GM12878 (cell line): ENCODE measurements at regions of chr2 and their contacts with region 1.

Region 1: DNA sequence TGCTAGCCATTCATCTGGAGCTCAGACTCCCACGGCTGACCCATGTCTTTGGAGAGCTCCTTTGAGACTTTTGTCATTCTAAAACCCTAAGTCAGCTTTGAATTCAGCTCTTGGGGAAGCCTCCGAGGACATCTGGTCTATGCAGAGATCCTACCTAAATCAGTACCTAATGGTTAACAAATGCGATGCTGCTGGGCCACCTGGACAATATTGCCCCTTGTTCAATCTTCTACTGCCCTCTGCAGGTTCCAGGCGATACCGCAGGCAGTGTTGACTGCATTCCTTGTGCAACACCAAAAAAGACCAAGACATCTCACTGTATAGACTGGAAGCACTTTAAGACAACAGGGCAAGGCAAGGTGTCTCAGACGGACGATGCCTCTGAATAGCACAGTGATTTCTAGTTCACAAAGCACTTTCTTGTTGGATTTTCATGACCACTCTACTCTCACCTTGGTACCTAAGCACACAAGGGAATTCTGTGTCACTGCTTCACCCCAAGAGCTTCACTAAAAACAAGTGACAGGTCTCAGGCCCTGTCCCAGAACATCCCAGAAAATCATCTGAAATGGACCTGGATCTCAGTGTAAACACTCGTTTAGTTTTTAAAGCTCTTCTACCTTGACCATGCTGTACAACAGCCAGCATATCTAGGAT is 80.9 kb downstream of the XDH start:
- DNase-seq: peak; percentile 24
- ATAC-seq: peak; percentile 98
- H3K4me3 ChIP-seq: no peak overlapping the region
- H3K27ac ChIP-seq: no peak overlapping the region
- H3K4me1 ChIP-seq: no peaks in the 10 kb centered on the region
- H3K27me3 ChIP-seq: peaks cover 0 to 3% of the 10 kb centered on the region in 2 experiments; a peak in 1 of 4 replicates
- CTCF ChIP-seq: peak; percentile 96 to 98 (median 97)
- EP300 ChIP-seq: no peak
- POLR2A ChIP-seq: no peak
- RAD21 ChIP-seq: peak; percentile 99

Region 2: DNA sequence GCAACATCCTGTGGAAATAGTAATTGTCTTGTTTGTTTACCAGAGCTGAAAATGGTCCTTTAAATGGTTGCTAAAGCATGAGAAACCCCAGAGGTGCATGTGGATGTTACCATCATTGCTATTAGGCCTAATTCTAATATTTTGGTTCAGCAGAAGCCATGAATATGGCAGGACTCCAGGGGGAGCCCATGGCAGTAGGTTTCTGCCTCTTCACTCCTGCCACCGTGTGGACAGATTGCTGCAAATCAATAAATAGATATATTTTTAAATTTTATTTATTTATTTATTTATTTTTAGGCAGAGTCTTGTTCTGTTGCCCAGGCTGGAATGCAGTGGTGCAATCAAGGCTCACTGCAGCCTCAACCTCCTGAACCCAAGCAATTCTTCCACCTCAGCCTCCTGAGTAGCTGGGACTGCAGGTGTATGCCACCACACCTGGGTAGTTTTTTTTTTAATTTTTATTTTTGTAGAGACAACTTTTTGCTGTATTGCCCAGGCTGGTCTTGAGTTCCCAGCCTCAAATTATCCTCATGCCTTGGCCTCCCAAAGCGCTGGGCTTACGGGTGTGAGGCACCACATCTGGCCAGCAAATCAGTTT is 471.5 kb before region 1 on chr2:
- CTCF ChIA-PET with region 1: interaction called, 89 read pairs
- POLR2A ChIA-PET with region 1: no interaction called
- RAD21 ChIA-PET with region 1: interaction called, 25 read pairs
- SMC1A ChIA-PET with region 1: interaction called, 9 read pairs
- in situ Hi-C with region 1: loop called (anchors 5 kb)
- intact Hi-C with region 1: loop called (anchors 1 kb)
- DNase-seq: no peak
- ATAC-seq: peak; percentile 84
- H3K4me3 ChIP-seq: no peak overlapping the region
- H3K27ac ChIP-seq: no peak overlapping the region
- H3K4me1 ChIP-seq: peaks cover 14% of the 10 kb centered on the region
- H3K27me3 ChIP-seq: no peaks in the 10 kb centered on the region
- CTCF ChIP-seq: peak; percentile 72 to 92 (median 86)
- EP300 ChIP-seq: no peak
- POLR2A ChIP-seq: no peak
- RAD21 ChIP-seq: peak; percentile 72

Region 3: GRCh38 chr2:31151501-31151900 is 182.2 kb before region 1 on chr2:
- CTCF ChIA-PET with region 1: interaction called, 10 read pairs
- POLR2A ChIA-PET with region 1: no interaction called
- RAD21 ChIA-PET with region 1: interaction called, 3 read pairs
- SMC1A ChIA-PET with region 1: interaction called, 11 read pairs
- in situ Hi-C with region 1: no loop called
- intact Hi-C with region 1: no loop called
- DNase-seq: no peak
- ATAC-seq: no peak
- H3K4me3 ChIP-seq: no peak overlapping the region
- H3K27ac ChIP-seq: no peak overlapping the region
- H3K4me1 ChIP-seq: no peaks in the 10 kb centered on the region
- H3K27me3 ChIP-seq: no peaks in the 10 kb centered on the region; a peak in 1 of 4 replicates
- CTCF ChIP-seq: 0 out of 6 replicates have a peak, but pooled peaks of 1 of the 3 experiments have one; percentile 4
- EP300 ChIP-seq: no peak
- POLR2A ChIP-seq: no peak
- RAD21 ChIP-seq: no peak

Region 4: DNA sequence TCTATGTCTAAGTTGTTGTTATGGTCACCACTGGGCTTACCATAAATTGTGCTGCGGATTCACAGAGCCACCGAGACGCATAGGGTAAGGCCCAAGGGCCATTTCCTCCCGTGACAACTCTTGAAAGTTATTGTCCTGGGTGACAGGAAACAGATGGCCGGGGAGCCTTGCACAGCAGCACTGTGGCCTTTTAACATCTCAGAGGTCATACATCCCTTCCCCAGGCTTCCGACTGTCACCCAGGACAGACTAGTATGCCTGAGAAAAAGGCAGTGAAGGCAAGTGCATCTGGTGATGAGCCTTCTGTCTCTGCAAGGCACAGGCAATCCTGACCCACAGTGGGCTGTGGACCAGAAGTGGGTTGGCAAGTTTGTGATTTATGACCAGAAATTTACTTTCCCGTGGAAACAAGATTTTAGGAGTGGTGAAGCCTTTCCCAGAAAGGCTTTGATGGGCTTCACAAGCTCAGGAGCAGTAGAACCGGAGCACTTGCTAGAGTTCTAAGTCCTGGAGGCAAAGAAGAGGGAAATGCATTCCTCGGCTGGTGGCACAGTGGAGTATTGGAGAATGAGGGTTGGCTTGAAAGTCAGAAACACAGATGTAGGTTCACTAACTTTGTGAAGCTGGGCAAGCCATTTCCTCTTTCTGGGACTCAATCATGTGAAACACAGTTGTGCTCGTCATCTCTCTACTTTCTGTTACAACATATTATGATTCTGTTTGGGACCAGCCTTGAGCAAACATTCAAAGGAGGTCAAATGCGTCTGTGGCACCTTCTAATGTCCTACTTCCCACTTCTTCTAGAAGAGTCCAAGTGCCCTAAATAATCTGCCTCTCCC is 114.3 kb before region 1 on chr2:
- CTCF ChIA-PET with region 1: interaction called, 5 read pairs
- POLR2A ChIA-PET with region 1: no interaction called
- RAD21 ChIA-PET with region 1: no interaction called
- SMC1A ChIA-PET with region 1: interaction called, 4 read pairs
- in situ Hi-C with region 1: no loop called
- intact Hi-C with region 1: loop called (anchors 5 kb)
- DNase-seq: peak; percentile 79
- ATAC-seq: peak; percentile 80
- H3K4me3 ChIP-seq: 0 out of 2 replicates have a peak overlapping the region, but pooled peaks have one; percentile 2
- H3K27ac ChIP-seq: peak overlapping the region; percentile 52
- H3K4me1 ChIP-seq: peaks cover 50% of the 10 kb centered on the region
- H3K27me3 ChIP-seq: no peaks in the 10 kb centered on the region
- CTCF ChIP-seq: no peak
- EP300 ChIP-seq: peak; percentile 28 to 48; a peak in 3 of 4 replicates
- POLR2A ChIP-seq: no peak
- RAD21 ChIP-seq: no peak

Region 5: GRCh38 chr2:31255911-31256571 is 77.6 kb before region 1 on chr2:
- CTCF ChIA-PET with region 1: interaction called, 19 read pairs
- POLR2A ChIA-PET with region 1: no interaction called
- RAD21 ChIA-PET with region 1: interaction called, 35 read pairs
- SMC1A ChIA-PET with region 1: interaction called, 19 read pairs
- in situ Hi-C with region 1: no loop called
- intact Hi-C with region 1: loop called (anchors 5 kb)
- DNase-seq: peak; percentile 72
- ATAC-seq: peak; percentile 60
- H3K4me3 ChIP-seq: no peak overlapping the region
- H3K27ac ChIP-seq: peak overlapping the region; percentile 27
- H3K4me1 ChIP-seq: peaks cover 77% of the 10 kb centered on the region
- H3K27me3 ChIP-seq: no peaks in the 10 kb centered on the region
- CTCF ChIP-seq: no peak
- EP300 ChIP-seq: peak in 1 of 2 experiments; percentile 76; a peak in 2 of 4 replicates
- POLR2A ChIP-seq: no peak
- RAD21 ChIP-seq: no peak

Region 6: DNA sequence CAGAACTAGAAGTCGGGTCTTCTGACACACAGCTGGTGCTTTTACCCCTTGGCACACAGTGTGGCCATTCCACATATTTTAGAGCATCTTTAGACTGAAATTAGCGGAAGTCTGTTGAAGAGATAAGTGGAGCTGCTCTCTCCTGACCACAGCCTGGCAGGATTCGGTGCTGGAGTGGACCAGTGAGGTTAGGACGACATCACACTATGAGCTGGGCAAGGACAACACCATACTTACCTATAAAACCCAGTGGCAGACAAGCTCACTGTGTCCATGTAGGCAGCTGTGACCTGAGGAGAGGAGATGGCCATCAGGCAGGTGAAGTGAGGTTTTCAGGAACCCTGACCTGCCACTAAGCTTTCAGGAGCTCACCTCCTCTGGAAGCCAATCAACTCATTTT is 10.8 kb after region 1 on chr2:
- CTCF ChIA-PET with region 1: interaction called, 10 read pairs
- POLR2A ChIA-PET with region 1: no interaction called
- RAD21 ChIA-PET with region 1: no interaction called
- SMC1A ChIA-PET with region 1: interaction called, 3 read pairs
- in situ Hi-C with region 1: no loop called
- intact Hi-C with region 1: no loop called
- DNase-seq: no peak
- ATAC-seq: no peak
- H3K4me3 ChIP-seq: no peak overlapping the region
- H3K27ac ChIP-seq: no peak overlapping the region
- H3K4me1 ChIP-seq: no peaks in the 10 kb centered on the region
- H3K27me3 ChIP-seq: no peaks in the 10 kb centered on the region
- CTCF ChIP-seq: no peak
- EP300 ChIP-seq: no peak
- POLR2A ChIP-seq: no peak
- RAD21 ChIP-seq: no peak